ENCODE measurements at regions of chr11 and their contacts with region 1.

Region 1: DNA sequence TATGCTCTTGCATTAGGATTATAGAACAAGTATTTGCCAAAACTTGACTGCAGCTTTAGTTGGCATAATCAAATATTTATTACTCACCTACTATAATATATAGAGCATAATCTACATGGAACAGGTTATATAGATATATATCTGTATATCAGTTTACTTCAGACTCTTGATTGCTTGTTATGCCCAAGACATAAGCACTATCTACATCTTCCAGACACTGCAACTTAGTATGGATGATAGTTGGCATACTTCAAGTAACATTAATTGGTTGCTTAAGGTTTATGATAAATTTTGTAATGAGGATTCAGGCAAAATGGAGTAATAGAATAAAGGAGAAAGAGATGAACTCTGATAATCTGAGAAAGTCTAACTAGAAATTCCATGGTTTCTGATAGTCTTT is 1.0 kb downstream of the CCDC15 start:
- DNase-seq: no peak
- ATAC-seq: no peak
- H3K4me3 ChIP-seq: no peak overlapping the region
- H3K27ac ChIP-seq: no peak overlapping the region
- H3K4me1 ChIP-seq: peaks cover 11% of the 10 kb centered on the region
- H3K27me3 ChIP-seq: no peaks in the 10 kb centered on the region
- CTCF ChIP-seq: no peak

Region 2: GRCh38 chr11:125128450-125128849 is 173.4 kb after region 1 on chr11:
- intact Hi-C with region 1: loop called (anchors 5 kb)
- DNase-seq: no peak
- ATAC-seq: no peak
- H3K4me3 ChIP-seq: no peak overlapping the region
- H3K27ac ChIP-seq: no peak overlapping the region
- H3K4me1 ChIP-seq: no peaks in the 10 kb centered on the region
- H3K27me3 ChIP-seq: no peaks in the 10 kb centered on the region
- CTCF ChIP-seq: no peak